GM12878 (cell line): ENCODE measurements at regions of chr10 and their contacts with region 1.

Region 1: DNA sequence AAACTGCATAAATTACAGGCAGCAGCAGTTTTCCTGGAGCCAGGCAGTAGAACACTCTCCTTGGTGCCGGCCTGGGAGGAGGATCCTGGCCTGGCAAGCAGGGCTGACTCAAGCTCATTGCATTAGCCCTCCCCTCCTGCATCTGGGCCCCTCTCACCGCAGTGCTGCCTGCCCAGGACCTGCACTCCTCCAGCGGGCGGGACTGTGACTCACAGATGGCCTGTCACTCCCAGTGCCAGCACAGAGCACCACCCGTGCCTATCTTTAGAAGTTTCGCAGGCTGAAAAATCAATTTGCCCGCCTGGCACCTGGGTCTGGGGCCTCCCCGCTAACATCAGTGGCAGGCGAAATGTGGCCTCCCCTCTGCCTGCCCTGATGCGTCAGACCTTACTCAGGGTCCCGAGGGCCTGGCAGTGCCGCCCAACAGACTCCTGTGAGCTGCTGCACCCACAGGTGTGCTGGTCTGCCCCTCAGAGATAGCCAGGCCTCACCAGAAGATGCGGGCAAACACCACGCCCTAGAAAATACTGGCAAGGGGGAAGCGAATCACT is 123.8 kb downstream of the KCNMA1 start:
- DNase-seq: no peak
- ATAC-seq: no peak; the same call in 2 of the 3 replicates
- H3K4me3 ChIP-seq: no peak overlapping the region
- H3K27ac ChIP-seq: no peak overlapping the region
- H3K4me1 ChIP-seq: no peaks in the 10 kb centered on the region
- H3K27me3 ChIP-seq: no peaks in the 10 kb centered on the region
- CTCF ChIP-seq: no peak
- EP300 ChIP-seq: no peak
- POLR2A ChIP-seq: no peak
- RAD21 ChIP-seq: no peak

Region 2: GRCh38 chr10:77501152-77501845 is 12.6 kb before region 1 on chr10:
- CTCF ChIA-PET with region 1: interaction called, 10 read pairs
- POLR2A ChIA-PET with region 1: interaction called, 5 read pairs
- RAD21 ChIA-PET with region 1: interaction called, 9 read pairs
- SMC1A ChIA-PET with region 1: interaction called, 13 read pairs
- in situ Hi-C with region 1: no loop called
- intact Hi-C with region 1: no loop called
- DNase-seq: no peak
- ATAC-seq: peak; percentile 32
- H3K4me3 ChIP-seq: no peak overlapping the region
- H3K27ac ChIP-seq: no peak overlapping the region
- H3K4me1 ChIP-seq: peaks cover 11% of the 10 kb centered on the region
- H3K27me3 ChIP-seq: no peaks in the 10 kb centered on the region
- CTCF ChIP-seq: no peak
- EP300 ChIP-seq: no peak
- POLR2A ChIP-seq: no peak
- RAD21 ChIP-seq: no peak

Region 3: GRCh38 chr10:77667426-77668324 is 153.8 kb after region 1 on chr10:
- CTCF ChIA-PET with region 1: no interaction called
- POLR2A ChIA-PET with region 1: no interaction called
- RAD21 ChIA-PET with region 1: no interaction called
- SMC1A ChIA-PET with region 1: no interaction called
- in situ Hi-C with region 1: no loop called
- intact Hi-C with region 1: no loop called
- DNase-seq: peak; percentile 77
- ATAC-seq: peak; percentile 95
- H3K4me3 ChIP-seq: no peak overlapping the region
- H3K27ac ChIP-seq: no peak overlapping the region
- H3K4me1 ChIP-seq: peaks cover 13% of the 10 kb centered on the region
- H3K27me3 ChIP-seq: no peaks in the 10 kb centered on the region
- CTCF ChIP-seq: no peak
- EP300 ChIP-seq: peak; percentile 11 to 48; a peak in 1 of 4 replicates
- POLR2A ChIP-seq: no peak
- RAD21 ChIP-seq: no peak